ENCODE measurements at regions of chr4 and their contacts with region 1.

Region 1: DNA sequence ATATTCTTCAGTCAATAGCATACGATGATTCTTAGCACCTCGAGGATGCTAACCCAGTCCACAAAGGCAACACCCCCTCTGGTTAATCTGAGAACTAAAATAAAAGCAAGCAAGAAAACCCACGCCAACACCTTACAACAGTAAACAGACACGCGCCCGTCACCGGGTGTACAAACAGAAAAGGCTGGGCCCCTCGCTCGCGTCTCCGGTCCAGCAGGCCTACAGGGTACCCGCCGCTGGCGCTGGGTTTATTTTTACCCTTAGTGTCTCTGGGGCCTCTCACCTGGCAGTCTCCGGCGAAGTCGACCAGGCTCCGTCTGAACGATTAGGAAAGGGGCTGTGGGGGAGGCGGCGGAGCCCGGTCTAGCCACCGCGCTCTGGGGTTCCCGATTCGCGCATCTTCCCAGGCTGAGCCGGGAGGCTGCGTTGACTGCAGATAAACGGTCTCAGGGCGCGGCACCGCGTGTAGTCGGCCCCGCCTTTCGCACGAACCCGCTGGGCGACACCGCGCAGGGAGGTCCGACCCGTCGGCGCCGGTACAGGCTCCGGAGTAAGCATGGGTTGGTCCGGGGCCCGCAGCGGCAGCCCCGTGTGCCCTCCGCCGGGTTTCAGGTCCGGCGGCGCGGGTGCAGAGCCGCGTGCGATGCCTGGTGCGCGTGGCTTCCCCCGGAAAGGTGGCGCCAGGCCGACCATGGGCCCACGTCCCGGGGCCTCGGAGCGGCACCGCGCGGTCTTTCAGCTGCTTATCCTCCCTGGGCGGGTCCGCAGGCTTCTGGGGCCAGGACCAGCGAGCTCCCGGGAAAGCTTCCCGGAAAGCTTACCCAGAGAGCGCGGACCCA is 441 bp downstream of the SLC9B2 start:
- DNase-seq: peak; percentile 37 to 82 (median 72)
- ATAC-seq: peak; percentile 74 to 80
- H3K4me3 Mint-ChIP-seq: peak overlapping the region; percentile 85 to 99 (median 98)
- H3K27ac Mint-ChIP-seq: peak overlapping the region; percentile 94 to 99 (median 99)
- H3K4me1 Mint-ChIP-seq: peaks cover 18 to 49% (median 48%) of the 10 kb centered on the region in 4 donors
- H3K27me3 Mint-ChIP-seq: no peaks in the 10 kb centered on the region

Region 2: DNA sequence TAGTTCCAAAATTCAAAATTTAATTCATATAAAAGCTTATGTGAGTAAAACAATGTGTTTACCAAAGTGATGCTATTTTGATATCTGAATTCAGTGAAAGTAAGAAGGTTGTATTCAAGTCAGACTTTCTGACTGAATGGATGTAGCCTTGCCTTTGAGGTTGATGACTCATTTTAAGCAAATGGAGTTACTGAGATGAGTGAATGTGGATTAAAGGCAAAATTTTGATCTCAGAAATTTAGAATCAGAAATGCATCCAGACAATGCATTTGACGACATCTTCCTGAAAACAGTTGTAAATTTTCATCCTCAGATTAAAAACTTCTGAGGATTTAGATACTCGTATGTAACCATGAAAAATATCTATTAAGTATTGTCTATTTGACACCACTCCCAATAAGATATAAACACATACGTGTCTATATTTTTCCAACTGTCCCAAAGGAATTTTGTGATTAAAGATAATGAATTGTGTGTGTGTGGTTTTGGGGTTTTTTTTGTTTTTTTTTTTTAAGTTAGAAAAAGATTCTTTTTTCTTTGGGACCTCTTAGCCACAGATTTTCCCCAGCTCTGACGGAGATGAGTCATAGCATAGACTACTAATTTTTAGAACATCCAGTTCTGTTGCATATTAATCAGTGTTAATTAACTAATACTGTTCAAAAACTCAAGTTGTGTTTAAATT is 540.6 kb before region 1 on chr4:
- POLR2A ChIA-PET with region 1: no interaction called
- DNase-seq: no peak
- ATAC-seq: peak; percentile 47 to 85
- H3K4me3 Mint-ChIP-seq: peak overlapping the region in 1 of 10 donors; percentile 19
- H3K27ac Mint-ChIP-seq: peak overlapping the region in 4 of 10 donors; percentile 3 to 50 (median 46)
- H3K4me1 Mint-ChIP-seq: peaks cover 14 to 62% (median 52%) of the 10 kb centered on the region in 4 donors
- H3K27me3 Mint-ChIP-seq: no peaks in the 10 kb centered on the region

Region 3: GRCh38 chr4:102935716-102936115 is 140.4 kb before region 1 on chr4:
- POLR2A ChIA-PET with region 1: no interaction called
- DNase-seq: no peak
- ATAC-seq: no peak
- H3K4me3 Mint-ChIP-seq: no peak overlapping the region
- H3K27ac Mint-ChIP-seq: no peak overlapping the region
- H3K4me1 Mint-ChIP-seq: peaks cover 0 to 3% (median 0%) of the 10 kb centered on the region in 4 donors
- H3K27me3 Mint-ChIP-seq: no peaks in the 10 kb centered on the region

Region 4: DNA sequence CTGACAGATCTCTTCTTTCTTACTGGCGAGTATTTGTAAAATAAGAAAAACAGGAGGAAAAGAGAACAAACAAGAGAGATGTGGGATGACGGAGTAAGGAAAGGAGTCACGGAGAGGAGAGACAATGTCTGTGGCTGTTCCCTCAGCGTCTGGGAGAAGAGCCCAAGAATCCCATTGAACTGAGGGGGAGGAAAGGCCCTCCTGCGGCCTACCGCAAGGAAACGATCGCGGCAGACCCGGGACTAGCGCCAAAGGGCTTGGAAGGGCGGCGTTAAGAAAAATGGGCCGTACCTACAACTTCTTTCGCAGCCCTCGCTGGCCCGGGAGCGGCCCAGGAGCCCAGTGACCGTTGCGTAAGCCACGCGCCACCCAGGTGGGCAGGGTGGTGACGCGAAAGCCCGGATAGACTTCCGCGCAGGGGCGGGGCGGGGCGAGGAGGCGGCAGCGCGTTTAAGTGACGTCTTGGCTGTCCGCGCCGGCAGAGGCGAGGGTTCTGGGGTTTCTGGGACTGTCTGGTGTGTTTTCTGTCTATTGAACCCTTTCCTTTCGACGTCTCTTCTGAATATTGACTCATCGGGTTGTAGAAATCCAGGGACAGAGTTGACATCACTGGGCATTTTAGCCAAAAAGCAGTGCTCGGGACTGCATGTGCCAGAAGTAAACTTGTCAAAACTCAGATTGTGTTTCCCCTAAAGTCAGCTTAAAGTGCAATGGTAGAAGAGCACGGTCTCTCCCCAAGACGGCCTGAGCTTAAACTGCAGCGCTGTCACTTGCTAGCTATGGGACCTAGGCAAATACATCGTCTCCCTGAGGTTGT is 56.6 kb before region 1 on chr4 and contains the start of gene SLC9B1:
- POLR2A ChIA-PET with region 1: interaction called, 10 read pairs
- DNase-seq: peak; percentile 88 to 96 (median 92)
- ATAC-seq: peak; percentile 95 to 96
- H3K4me3 Mint-ChIP-seq: peak within 1 kb of the TSS; percentile 86 to 96 (median 92)
- H3K27ac Mint-ChIP-seq: peak within 1 kb of the TSS in 5 of 10 donors; percentile 96 to 100 (median 99)
- H3K4me1 Mint-ChIP-seq: peaks cover 4 to 27% (median 19%) of the 10 kb centered on the region in 4 donors
- H3K27me3 Mint-ChIP-seq: no peaks in the 10 kb centered on the region
- polyA plus RNA-seq, gene SLC9B1: 1.7 to 3.7 (median 1.9) TPM

Measured in naive thymus-derived CD8-positive, alpha-beta T cell (primary cell).